Left lung (tissue), 14 donors: ENCODE measurements at regions of chr2 and their contacts with region 1.

Region 1: GRCh38 chr2:169141713-169142352 is 72.5 kb downstream of the DHRS9 start:
- DNase-seq: peak in 2 of 4 donors; percentile 26 to 36
- ATAC-seq: peak; percentile 90
- H3K4me3 ChIP-seq: no peak overlapping the region
- H3K27ac ChIP-seq: no peak overlapping the region
- H3K4me1 ChIP-seq: no peaks in the 10 kb centered on the region
- H3K27me3 ChIP-seq: no peaks in the 10 kb centered on the region
- CTCF ChIP-seq: peak; percentile 84 to 88

Region 2: GRCh38 chr2:168961450-168962229 is 180.2 kb before region 1 on chr2:
- intact Hi-C with region 1: loop called in 1 of 2 experiments (anchors 10 kb)
- DNase-seq: peak in 2 of 4 donors; percentile 48 to 69
- ATAC-seq: peak; percentile 98
- H3K4me3 ChIP-seq: no peak overlapping the region
- H3K27ac ChIP-seq: no peak overlapping the region
- H3K4me1 ChIP-seq: no peaks in the 10 kb centered on the region
- H3K27me3 ChIP-seq: no peaks in the 10 kb centered on the region
- CTCF ChIP-seq: peak; percentile 76 to 82